PC-9 (cell line): ENCODE measurements at regions of chr12 and their contacts with region 1.

Region 1: GRCh38 chr12:118372541-118373495 is at the start of gene TAOK3:
- DNase-seq: peak; percentile 96 to 97
- H3K4me3 ChIP-seq: peak within 1 kb of the TSS; percentile 77
- H3K27ac ChIP-seq: peak within 1 kb of the TSS; percentile 72
- H3K4me1 ChIP-seq: peaks cover 30% of the 10 kb centered on the region
- H3K27me3 ChIP-seq: no peaks in the 10 kb centered on the region
- CTCF ChIP-seq: no peak
- total RNA-seq, gene TAOK3: 55.8 and 60.5 TPM in 2 replicates

Region 2: DNA sequence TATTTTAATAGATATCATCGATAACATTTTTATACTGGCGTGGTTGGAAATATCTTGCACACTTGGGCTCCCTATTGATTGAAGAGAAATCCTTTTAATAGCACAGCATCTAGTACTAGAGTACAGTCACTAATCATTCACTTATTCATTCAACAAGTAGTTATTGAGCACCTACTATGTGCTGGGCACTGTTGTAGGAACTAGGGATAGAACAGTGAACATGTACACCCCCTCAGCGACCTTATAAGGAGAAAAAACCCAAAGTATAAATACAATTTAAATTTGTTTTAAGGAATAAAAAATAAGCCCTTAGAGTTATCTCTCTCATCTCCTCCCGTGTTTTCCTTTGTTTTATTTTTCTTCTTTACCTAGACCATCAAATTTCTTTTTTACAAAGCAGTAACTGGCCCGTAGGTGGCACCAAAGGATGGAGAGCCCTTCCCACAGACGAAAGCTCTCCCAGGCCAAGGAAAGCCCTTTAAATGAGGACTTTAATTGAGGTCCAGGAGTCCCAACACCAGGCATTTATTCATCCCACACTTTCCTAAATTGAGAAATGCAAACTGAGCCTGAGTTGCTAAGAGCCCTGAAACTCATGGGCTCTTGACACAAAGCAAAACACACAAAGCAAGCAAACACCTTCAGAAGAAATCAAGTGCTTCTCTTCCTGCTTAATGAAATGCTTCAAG is 207.9 kb before region 1 on chr12:
- CTCF ChIA-PET with region 1: interaction called, 5 read pairs
- POLR2A ChIA-PET with region 1: no interaction called
- intact Hi-C with region 1: loop called (anchors 1 kb)
- DNase-seq: peak in 1 of 2 experiments; percentile 30
- H3K4me3 ChIP-seq: no peak overlapping the region
- H3K27ac ChIP-seq: no peak overlapping the region
- H3K4me1 ChIP-seq: no peaks in the 10 kb centered on the region
- H3K27me3 ChIP-seq: no peaks in the 10 kb centered on the region
- CTCF ChIP-seq: peak; percentile 78

Region 3: GRCh38 chr12:118237052-118237665 is 135.7 kb before region 1 on chr12:
- CTCF ChIA-PET with region 1: no interaction called
- POLR2A ChIA-PET with region 1: no interaction called
- intact Hi-C with region 1: loop called (anchors 5 kb)
- DNase-seq: no peak
- H3K4me3 ChIP-seq: no peak overlapping the region
- H3K27ac ChIP-seq: peak overlapping the region; percentile 86
- H3K4me1 ChIP-seq: peaks cover 35% of the 10 kb centered on the region
- H3K27me3 ChIP-seq: no peaks in the 10 kb centered on the region
- CTCF ChIP-seq: no peak

Region 4: GRCh38 chr12:118302066-118302465 is 70.8 kb before region 1 on chr12:
- CTCF ChIA-PET with region 1: interaction called, 15 read pairs
- POLR2A ChIA-PET with region 1: no interaction called
- intact Hi-C with region 1: loop called (anchors 1 kb)
- DNase-seq: peak; percentile 75 to 97
- H3K4me3 ChIP-seq: no peak overlapping the region
- H3K27ac ChIP-seq: peak overlapping the region; percentile 66
- H3K4me1 ChIP-seq: peaks cover 55% of the 10 kb centered on the region
- H3K27me3 ChIP-seq: no peaks in the 10 kb centered on the region
- CTCF ChIP-seq: no peak

Region 5: GRCh38 chr12:118357257-118358007 is 15.4 kb before region 1 on chr12:
- CTCF ChIA-PET with region 1: no interaction called
- POLR2A ChIA-PET with region 1: no interaction called
- intact Hi-C with region 1: no loop called
- DNase-seq: no peak
- H3K4me3 ChIP-seq: no peak overlapping the region
- H3K27ac ChIP-seq: peak overlapping the region; percentile 81
- H3K4me1 ChIP-seq: peaks cover 51% of the 10 kb centered on the region
- H3K27me3 ChIP-seq: no peaks in the 10 kb centered on the region
- CTCF ChIP-seq: no peak

Region 6: GRCh38 chr12:118424906-118425305 is 52.1 kb after region 1 on chr12:
- CTCF ChIA-PET with region 1: no interaction called
- POLR2A ChIA-PET with region 1: no interaction called
- intact Hi-C with region 1: no loop called
- DNase-seq: no peak
- H3K4me3 ChIP-seq: no peak overlapping the region
- H3K27ac ChIP-seq: no peak overlapping the region
- H3K4me1 ChIP-seq: peaks cover 11% of the 10 kb centered on the region
- H3K27me3 ChIP-seq: no peaks in the 10 kb centered on the region
- CTCF ChIP-seq: no peak

Region 7: GRCh38 chr12:118467641-118468305 is 95.0 kb after region 1 on chr12:
- CTCF ChIA-PET with region 1: no interaction called
- POLR2A ChIA-PET with region 1: no interaction called
- intact Hi-C with region 1: no loop called
- DNase-seq: no peak
- H3K4me3 ChIP-seq: no peak overlapping the region
- H3K27ac ChIP-seq: no peak overlapping the region
- H3K4me1 ChIP-seq: no peaks in the 10 kb centered on the region
- H3K27me3 ChIP-seq: peaks cover 81% of the 10 kb centered on the region
- CTCF ChIP-seq: no peak